ENCODE measurements at regions of chr2 and their contacts with region 1.

Region 1: DNA sequence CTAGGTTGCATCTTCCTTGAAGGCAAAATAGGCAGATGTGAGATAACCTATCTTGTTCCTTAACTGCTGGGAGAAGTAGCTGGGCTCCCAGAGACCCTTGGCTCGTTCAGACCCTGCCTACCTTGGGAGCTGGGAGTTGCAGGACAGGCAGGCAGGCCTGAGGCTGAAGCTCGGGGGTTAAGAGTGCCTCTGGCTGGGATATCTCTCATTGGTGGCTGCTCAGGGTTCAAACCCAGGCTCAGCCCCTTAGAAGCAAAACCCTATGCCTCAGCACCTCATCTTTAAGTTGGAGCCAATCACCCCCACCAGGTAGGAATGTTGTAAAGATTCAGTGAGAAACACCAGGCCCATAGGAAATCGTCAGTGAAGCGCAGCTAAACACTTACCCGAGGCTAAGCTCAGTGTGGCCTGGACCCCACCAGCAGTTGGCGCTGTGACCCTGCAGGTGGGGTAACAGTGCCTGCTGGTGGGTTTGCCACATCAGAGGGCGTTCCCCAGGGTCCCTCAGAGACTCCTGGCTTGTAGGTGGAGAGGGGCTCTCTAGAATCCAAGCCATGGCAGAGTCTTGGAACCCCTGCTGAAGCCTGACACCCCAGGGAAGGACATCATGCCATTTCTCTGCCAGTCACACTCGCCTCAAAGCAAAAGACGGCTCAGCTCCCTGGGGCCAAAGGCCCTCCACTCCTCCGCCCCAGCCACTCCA is 54.6 kb upstream of the GPR17 start:
- DNase-seq: peak; percentile 49 to 81 (median 64)
- ATAC-seq: peak; percentile 67 to 94 (median 88)
- H3K4me3 ChIP-seq: no peak overlapping the region
- H3K27ac ChIP-seq: no peak overlapping the region
- H3K4me1 ChIP-seq: no peaks in the 10 kb centered on the region
- H3K27me3 ChIP-seq: no peaks in the 10 kb centered on the region
- CTCF ChIP-seq: peak; percentile 87 to 99 (median 94)
- POLR2A ChIP-seq: no peak

Region 2: DNA sequence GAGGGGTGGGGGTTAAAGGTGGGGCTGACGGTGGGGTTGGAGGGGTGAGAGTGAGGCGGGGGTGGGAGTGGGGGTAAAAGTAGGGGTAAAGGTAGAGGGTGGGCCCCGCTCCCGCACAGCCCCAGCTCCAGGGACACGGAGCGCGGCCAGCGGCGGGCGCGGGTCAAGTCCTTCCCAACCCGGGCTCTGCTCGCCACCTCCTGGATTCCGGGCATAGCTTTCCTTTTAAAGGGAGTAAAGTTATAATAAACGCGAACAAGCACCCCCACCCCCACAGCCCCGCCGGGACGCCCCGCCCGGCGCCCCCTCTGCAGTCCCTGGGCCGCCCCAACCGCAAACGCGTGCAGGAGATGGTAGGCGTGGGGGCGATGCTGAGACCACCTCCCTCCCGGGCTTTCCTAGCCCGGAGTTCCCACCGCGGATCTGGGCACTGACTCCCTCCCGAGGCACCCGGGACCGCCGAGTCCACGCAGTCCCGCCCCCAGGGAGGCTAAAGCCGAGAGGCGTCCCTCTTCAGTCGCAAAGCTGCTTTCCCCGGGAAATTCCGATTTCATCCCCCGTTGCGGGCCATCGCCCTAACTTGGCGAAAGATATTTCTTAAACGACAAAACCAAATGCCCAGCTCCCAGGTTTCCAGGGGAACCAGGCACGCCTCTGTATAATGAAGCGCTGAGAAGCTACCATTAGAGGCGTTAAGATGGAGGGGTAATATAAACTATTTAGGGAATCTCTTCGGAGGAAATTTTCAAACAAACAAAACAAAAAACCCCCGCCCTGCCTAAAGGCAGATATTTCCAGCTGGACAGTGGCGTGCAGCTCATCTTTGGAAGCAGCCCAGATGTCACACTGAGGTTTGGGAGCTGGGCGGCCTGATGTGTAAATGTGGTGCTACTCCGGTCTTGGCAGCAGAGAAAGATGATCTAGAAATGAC is 84.2 kb after region 1 on chr2 and contains the start of gene LIMS2:
- intact Hi-C with region 1: loop called in 4 of 10 experiments (anchors 5 to 10 kb)
- DNase-seq: peak; percentile 74 to 81 (median 78)
- ATAC-seq: peak; percentile 33 to 66 (median 49)
- H3K4me3 ChIP-seq: peak within 1 kb of the TSS; percentile 69 to 98 (median 86)
- H3K27ac ChIP-seq: peak within 1 kb of the TSS; percentile 88 to 100 (median 96)
- H3K4me1 ChIP-seq: peaks cover 0 to 61% (median 44%) of the 10 kb centered on the region in 12 donors
- H3K27me3 ChIP-seq: peaks cover 0 to 26% (median 0%) of the 10 kb centered on the region in 9 donors
- CTCF ChIP-seq: peak in 10 of 12 donors; percentile 11 to 45 (median 28)
- POLR2A ChIP-seq: peak in 1 of 2 donors; percentile 26
- total RNA-seq, gene LIMS2: 97.1 to 225 (median 158) TPM

Region 3: GRCh38 chr2:127695491-127696472 is 104.4 kb after region 1 on chr2:
- intact Hi-C with region 1: loop called in 7 of 10 experiments (anchors 1 to 5 kb)
- DNase-seq: peak; percentile 78 to 89 (median 84)
- ATAC-seq: peak; percentile 65 to 91 (median 88)
- H3K4me3 ChIP-seq: peak overlapping the region in 10 of 12 donors; percentile 23 to 55 (median 46)
- H3K27ac ChIP-seq: peak overlapping the region in 5 of 12 donors; percentile 23 to 72 (median 36)
- H3K4me1 ChIP-seq: peaks cover 0 to 18% (median 8%) of the 10 kb centered on the region in 12 donors
- H3K27me3 ChIP-seq: no peaks in the 10 kb centered on the region
- CTCF ChIP-seq: peak; percentile 40 to 85 (median 70)
- POLR2A ChIP-seq: no peak

Region 4: DNA sequence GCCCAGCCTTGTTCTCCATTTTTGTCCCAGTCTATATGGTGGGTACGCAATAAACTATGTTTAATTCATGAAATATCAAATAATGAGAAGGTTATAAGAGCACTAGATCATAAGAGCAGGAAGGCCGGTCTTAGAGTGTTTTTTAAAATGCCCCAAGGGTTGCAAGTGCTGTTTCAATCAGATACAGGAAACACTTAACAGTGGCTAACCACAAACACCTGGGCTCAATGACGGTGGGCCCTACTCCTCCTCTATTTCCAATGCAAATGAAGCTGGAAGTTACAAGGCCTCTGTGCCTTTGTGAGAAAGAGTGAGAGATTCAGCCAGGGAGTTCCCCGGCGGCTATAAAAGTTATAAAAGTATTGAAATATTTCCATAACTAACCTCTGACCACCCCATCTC is 238.5 kb after region 1 on chr2:
- intact Hi-C with region 1: loop called in 3 of 10 experiments (anchors 10 kb)
- DNase-seq: no peak
- ATAC-seq: no peak
- H3K4me3 ChIP-seq: no peak overlapping the region
- H3K27ac ChIP-seq: peak overlapping the region in 1 of 12 donors; percentile 18
- H3K4me1 ChIP-seq: peaks cover 0 to 19% (median 0%) of the 10 kb centered on the region in 12 donors
- H3K27me3 ChIP-seq: no peaks in the 10 kb centered on the region
- CTCF ChIP-seq: no peak
- POLR2A ChIP-seq: no peak

Measured in heart left ventricle (tissue), 16 donors.